Activated naive CD4-positive, alpha-beta T cell treated with anti-CD3 and anti-CD28 coated beads for 36 hours (primary cell): ENCODE measurements at regions of chr6 and their contacts with region 1.

Region 1: DNA sequence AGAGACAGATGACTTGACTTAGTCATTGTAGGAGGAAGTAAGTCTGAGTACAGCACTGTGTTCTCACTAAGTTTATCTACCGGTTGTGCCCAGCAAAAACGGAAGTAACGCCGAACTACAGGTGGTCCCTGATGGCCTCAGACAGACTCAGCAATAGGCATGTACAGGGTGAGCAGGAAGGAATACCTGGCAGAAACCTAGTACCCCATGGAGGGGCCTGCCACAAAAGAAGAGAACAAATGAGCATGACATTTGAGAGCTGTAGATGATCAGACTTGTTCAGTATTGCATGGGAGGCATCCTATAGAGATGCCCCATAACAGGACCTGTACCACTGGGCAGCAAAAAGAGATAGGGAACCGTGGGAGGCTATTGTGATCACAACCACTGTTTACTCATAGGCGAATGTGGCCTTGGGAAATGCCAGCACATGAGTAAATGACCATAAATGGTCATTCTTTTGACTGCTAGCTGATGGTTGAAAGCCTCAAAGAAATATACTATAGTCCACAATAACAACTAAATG is 106.4 kb upstream of the TAB2 start:
- DNase-seq: peak; percentile 57
- H3K4me3 Mint-ChIP-seq: no peak overlapping the region
- H3K27ac Mint-ChIP-seq: peak overlapping the region; percentile 77
- H3K4me1 Mint-ChIP-seq: peaks cover 19% of the 10 kb centered on the region
- H3K27me3 Mint-ChIP-seq: no peaks in the 10 kb centered on the region

Region 2: GRCh38 chr6:149082286-149082707 is 128.8 kb before region 1 on chr6:
- CTCF ChIA-PET with region 1: no interaction called
- intact Hi-C with region 1: loop called (anchors 2 kb)
- DNase-seq: peak; percentile 97
- H3K4me3 Mint-ChIP-seq: no peak overlapping the region
- H3K27ac Mint-ChIP-seq: peak overlapping the region; percentile 41
- H3K4me1 Mint-ChIP-seq: peaks cover 54% of the 10 kb centered on the region
- H3K27me3 Mint-ChIP-seq: no peaks in the 10 kb centered on the region

Region 3: DNA sequence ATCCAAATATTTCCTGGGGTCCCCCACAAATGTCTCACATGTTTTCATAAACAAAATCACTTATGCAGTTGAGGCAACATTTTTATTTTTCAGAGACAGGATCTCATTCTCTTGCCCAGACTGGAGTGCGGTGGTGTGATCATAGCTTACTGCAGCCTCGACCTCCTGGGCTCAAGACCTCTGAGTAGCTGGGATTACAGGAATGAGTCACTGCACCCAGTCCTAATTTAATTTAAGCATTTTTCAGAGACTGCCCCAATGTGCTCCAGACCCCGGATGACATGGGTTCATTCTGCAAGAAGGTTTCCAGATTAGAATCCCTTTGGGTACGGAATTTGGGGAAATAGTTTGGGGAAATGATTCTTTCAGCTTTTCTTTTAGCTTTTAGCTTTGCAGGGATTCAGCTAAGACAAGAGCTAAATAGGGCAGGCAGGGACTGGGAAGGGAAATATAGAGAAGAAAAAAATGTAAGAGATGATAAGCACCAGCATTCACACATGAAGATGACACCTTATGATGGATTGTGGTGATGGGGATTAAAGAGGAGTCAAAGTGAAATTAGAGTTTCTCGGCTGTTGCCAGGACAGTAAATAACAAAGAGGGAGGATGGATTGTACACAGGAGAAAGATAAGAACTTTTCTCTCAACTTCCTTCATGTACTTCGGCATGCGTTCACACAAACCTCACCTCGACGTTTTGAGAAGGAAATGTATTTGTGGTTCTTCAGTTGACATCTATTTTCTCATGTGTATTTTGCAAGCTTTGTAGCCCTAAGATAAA is 63.0 kb before region 1 on chr6:
- CTCF ChIA-PET with region 1: no interaction called
- intact Hi-C with region 1: loop called (anchors 2 kb)
- DNase-seq: peak; percentile 27
- H3K4me3 Mint-ChIP-seq: no peak overlapping the region
- H3K27ac Mint-ChIP-seq: peak overlapping the region; percentile 56
- H3K4me1 Mint-ChIP-seq: peaks cover 58% of the 10 kb centered on the region
- H3K27me3 Mint-ChIP-seq: no peaks in the 10 kb centered on the region

Region 4: DNA sequence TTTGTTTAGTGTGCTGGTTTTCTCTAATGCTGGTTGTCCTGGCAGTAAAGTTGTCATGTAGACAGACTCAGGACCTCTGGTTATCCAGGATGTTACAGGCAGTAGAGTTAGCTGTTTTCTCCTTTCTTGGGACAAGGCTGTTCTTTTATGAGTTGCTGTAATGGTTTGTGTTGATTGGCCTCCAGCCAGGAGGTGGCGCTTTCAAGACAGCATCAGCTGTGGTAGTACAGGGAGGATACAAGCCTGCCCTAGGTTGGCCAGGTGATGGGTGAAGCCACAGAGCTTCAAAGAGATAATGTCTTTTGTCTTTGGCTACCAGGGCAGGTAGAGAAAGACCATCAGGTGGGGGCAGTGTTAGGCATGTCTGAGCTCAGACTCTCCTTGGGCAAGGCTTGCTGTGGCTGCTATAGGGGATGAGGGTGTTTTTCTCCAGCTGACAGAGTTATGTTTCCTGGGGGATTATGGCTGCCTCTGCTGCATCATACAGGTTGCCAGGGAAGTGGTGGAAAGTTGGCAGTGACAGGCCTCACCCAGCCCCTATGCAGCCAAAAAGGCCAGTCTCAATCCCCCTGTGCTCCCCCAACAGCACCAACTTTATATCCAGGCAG is 20.8 kb before region 1 on chr6:
- CTCF ChIA-PET with region 1: interaction called, 3 read pairs
- intact Hi-C with region 1: loop called (anchors 1 kb)
- DNase-seq: peak; percentile 87
- H3K4me3 Mint-ChIP-seq: no peak overlapping the region
- H3K27ac Mint-ChIP-seq: no peak overlapping the region
- H3K4me1 Mint-ChIP-seq: peaks cover 19% of the 10 kb centered on the region
- H3K27me3 Mint-ChIP-seq: no peaks in the 10 kb centered on the region

Region 5: DNA sequence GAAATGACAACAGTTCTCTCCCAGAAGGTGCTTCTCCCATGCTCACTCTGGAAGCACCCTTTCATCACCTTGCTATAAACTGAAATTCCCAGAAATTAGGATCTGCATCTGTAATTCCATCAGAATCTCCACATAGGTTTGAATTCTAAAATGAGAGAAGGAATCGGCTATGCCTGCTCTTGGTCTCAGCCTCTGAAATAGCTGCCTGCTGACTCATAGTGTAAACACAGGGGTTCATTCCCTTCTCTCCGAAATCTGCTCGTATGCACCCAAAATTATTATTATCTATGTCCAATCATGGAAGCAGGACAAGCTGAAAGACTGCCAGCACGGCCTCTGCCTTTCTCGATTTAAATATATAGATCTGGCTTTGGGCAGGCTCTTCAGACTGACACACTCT is 31.8 kb after region 1 on chr6:
- CTCF ChIA-PET with region 1: no interaction called
- intact Hi-C with region 1: no loop called
- DNase-seq: no peak
- H3K4me3 Mint-ChIP-seq: no peak overlapping the region
- H3K27ac Mint-ChIP-seq: no peak overlapping the region
- H3K4me1 Mint-ChIP-seq: peaks cover 19% of the 10 kb centered on the region
- H3K27me3 Mint-ChIP-seq: no peaks in the 10 kb centered on the region

Region 6: GRCh38 chr6:149271348-149272340 is 60.5 kb after region 1 on chr6:
- CTCF ChIA-PET with region 1: no interaction called
- intact Hi-C with region 1: loop called (anchors 2 kb)
- DNase-seq: peak; percentile 68
- H3K4me3 Mint-ChIP-seq: peak overlapping the region; percentile 48
- H3K27ac Mint-ChIP-seq: peak overlapping the region; percentile 89
- H3K4me1 Mint-ChIP-seq: peaks cover 35% of the 10 kb centered on the region
- H3K27me3 Mint-ChIP-seq: no peaks in the 10 kb centered on the region